Activated CD4-positive, alpha-beta T cell treated with anti-CD3 and anti-CD28 coated beads for 36 hours (primary cell): ENCODE measurements at regions of chr10 and their contacts with region 1.

Region 1: GRCh38 chr10:69179743-69180524 is at the start of gene SUPV3L1:
- DNase-seq: peak; percentile 91
- ATAC-seq: peak; percentile 89
- H3K4me3 Mint-ChIP-seq: peak within 1 kb of the TSS; percentile 90
- H3K27ac Mint-ChIP-seq: peak within 1 kb of the TSS; percentile 100
- H3K4me1 Mint-ChIP-seq: peaks cover 38% of the 10 kb centered on the region
- H3K27me3 Mint-ChIP-seq: no peaks in the 10 kb centered on the region
- total RNA-seq, gene SUPV3L1: 46.6 to 54.1 TPM

Region 2: GRCh38 chr10:68955832-68956532 is 224.0 kb before region 1 on chr10 and contains the start of gene DDX21:
- CTCF ChIA-PET with region 1: no interaction called
- POLR2A ChIA-PET with region 1: no interaction called
- intact Hi-C with region 1: loop called (anchors 1 to 2 kb)
- DNase-seq: peak; percentile 94
- ATAC-seq: peak; percentile 85
- H3K4me3 Mint-ChIP-seq: peak within 1 kb of the TSS; percentile 98
- H3K27ac Mint-ChIP-seq: peak within 1 kb of the TSS; percentile 100
- H3K4me1 Mint-ChIP-seq: peaks cover 35% of the 10 kb centered on the region
- H3K27me3 Mint-ChIP-seq: no peaks in the 10 kb centered on the region
- total RNA-seq, gene DDX21: 187 to 192 TPM

Region 3: DNA sequence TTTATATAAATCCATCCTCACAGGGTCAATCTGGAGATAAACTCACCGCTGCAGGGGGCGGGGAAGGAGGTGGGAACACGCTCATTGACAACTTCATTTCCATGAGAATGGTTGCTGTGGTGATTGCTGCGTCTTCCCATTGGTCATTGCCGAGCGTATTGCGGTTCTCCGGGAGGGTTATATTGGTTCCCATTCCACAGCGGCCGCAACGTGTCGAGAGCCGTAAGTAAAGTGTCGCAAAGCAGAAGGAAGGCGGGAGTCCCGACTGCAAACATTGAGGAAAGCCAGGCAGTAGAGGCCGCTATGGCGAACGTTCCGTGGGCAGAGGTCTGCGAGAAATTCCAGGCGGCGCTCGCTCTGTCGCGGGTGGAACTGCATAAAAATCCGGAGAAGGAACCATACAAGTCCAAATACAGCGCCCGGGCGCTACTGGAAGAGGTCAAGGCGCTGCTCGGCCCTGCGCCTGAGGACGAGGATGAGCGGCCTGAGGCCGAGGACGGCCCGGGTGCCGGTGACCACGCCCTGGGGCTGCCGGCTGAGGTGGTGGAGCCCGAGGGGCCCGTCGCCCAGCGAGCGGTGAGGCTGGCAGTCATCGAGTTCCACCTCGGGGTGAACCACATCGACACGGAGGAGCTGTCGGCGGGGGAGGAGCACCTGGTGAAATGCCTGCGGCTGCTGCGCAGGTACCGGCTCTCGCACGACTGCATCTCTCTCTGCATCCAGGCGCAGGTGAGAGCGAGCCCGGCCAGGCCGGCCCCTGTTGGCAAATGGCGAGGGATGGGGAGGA is 191.2 kb before region 1 on chr10 and contains the start of gene KIFBP:
- CTCF ChIA-PET with region 1: interaction called, 6 read pairs
- POLR2A ChIA-PET with region 1: no interaction called
- intact Hi-C with region 1: loop called in 1 of 2 experiments (anchors 1 kb)
- DNase-seq: peak; percentile 91
- ATAC-seq: peak; percentile 89
- H3K4me3 Mint-ChIP-seq: peak within 1 kb of the TSS; percentile 86
- H3K27ac Mint-ChIP-seq: peak within 1 kb of the TSS; percentile 86
- H3K4me1 Mint-ChIP-seq: peaks cover 51% of the 10 kb centered on the region
- H3K27me3 Mint-ChIP-seq: no peaks in the 10 kb centered on the region
- total RNA-seq, gene KIFBP: 12.9 to 15.6 TPM

Region 4: GRCh38 chr10:69087590-69088470 is 92.1 kb before region 1 on chr10 and contains the start of gene SRGN:
- CTCF ChIA-PET with region 1: no interaction called
- POLR2A ChIA-PET with region 1: interaction called, 3 read pairs
- intact Hi-C with region 1: loop called (anchors 1 kb)
- DNase-seq: peak; percentile 87
- ATAC-seq: peak; percentile 57
- H3K4me3 Mint-ChIP-seq: peak within 1 kb of the TSS; percentile 86
- H3K27ac Mint-ChIP-seq: peak within 1 kb of the TSS; percentile 99
- H3K4me1 Mint-ChIP-seq: peaks cover 55% of the 10 kb centered on the region
- H3K27me3 Mint-ChIP-seq: no peaks in the 10 kb centered on the region
- total RNA-seq, gene SRGN: 375 to 400 TPM

Region 5: GRCh38 chr10:69215405-69216176 is 35.7 kb after region 1 on chr10:
- CTCF ChIA-PET with region 1: interaction called, 3 read pairs
- POLR2A ChIA-PET with region 1: no interaction called
- intact Hi-C with region 1: loop called (anchors 1 to 2 kb)
- DNase-seq: peak; percentile 72
- ATAC-seq: peak; percentile 80
- H3K4me3 Mint-ChIP-seq: peak overlapping the region; percentile 15
- H3K27ac Mint-ChIP-seq: peak overlapping the region; percentile 81
- H3K4me1 Mint-ChIP-seq: peaks cover 36% of the 10 kb centered on the region
- H3K27me3 Mint-ChIP-seq: no peaks in the 10 kb centered on the region

Region 6: DNA sequence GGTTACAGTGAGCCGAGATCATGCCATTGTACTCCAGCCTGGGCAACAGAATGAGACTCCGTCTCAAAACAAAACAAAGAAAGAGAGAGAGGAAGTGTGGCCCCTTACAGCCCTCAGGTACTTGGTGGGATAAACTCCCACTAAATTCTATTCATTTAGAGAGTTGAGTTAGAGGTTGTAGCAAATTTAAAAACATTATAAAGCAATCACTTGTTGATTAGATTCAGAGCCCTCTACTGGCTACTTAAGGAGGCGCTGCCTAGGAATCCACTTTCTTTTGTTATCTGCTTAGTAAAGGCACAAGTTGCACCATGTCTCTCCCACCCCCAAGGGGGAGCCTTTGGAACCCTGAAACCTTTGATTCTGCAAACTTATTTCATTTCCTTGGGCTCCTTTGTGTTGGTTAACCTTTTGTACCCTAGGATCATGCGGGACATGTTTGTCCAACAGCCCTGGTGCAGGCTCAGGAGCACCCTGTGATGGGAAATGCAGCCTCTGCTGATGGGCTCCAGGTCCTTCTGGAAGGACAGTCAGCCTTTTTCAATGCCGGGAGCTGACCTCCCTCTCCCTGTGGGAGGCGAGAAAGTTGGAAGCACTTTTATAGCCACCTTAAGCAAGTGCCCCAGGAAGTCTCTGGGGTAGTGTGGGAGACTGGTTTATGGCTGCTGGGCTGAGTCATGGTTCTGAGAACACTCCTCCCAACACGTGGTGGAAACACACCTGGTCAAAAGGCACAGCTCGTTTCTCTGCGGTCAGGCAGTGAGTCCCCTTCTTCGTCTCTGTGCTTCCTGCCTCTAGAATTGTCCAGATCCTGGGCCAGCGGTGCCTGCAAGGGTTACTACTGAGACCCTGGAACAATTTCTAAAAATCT is 42.5 kb after region 1 on chr10:
- CTCF ChIA-PET with region 1: interaction called, 3 read pairs
- POLR2A ChIA-PET with region 1: no interaction called
- intact Hi-C with region 1: loop called (anchors 1 kb)
- DNase-seq: peak; percentile 90
- ATAC-seq: peak; percentile 92
- H3K4me3 Mint-ChIP-seq: peak overlapping the region; percentile 52
- H3K27ac Mint-ChIP-seq: peak overlapping the region; percentile 91
- H3K4me1 Mint-ChIP-seq: peaks cover 32% of the 10 kb centered on the region
- H3K27me3 Mint-ChIP-seq: no peaks in the 10 kb centered on the region

Region 7: DNA sequence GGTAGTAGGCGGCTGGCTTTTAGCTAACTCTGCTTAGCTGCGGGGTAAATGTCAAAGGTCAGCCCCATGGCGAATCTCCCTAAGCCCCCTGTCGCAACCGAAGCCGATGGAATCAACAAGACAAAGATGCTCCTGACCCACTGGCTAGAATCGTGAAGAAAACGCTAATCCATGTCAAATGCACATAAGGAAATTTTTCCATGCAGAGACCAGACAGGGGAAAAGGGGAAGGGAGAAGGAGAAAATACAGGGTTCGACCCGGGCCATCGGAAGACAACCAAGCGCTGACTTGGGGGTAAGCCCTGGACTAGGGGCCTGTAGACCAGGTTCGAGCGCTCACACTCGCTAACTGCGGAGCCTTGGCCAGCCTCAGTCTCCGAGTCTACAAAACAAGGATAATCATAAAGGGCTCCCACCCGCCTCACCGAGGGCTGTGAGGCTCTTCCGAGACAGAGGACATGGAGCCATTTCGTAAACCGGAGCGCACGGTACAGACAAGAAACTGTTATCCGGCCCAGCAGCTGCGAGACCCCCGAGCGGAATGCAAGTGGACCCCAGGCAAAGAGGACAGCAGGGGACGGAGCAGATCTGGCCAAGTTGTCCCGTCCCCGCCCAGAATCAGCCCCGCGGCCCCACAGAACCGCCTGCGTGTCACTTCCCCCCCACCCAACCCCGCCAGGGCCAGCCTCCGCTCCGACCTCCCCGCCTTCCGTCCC is 989.9 kb after region 1 on chr10:
- CTCF ChIA-PET with region 1: no interaction called
- POLR2A ChIA-PET with region 1: no interaction called
- intact Hi-C with region 1: loop called in 1 of 2 experiments (anchors 5 kb)
- DNase-seq: no peak
- ATAC-seq: peak; percentile 5
- H3K4me3 Mint-ChIP-seq: peak overlapping the region; percentile 94
- H3K27ac Mint-ChIP-seq: peak overlapping the region; percentile 84
- H3K4me1 Mint-ChIP-seq: peaks cover 64% of the 10 kb centered on the region
- H3K27me3 Mint-ChIP-seq: no peaks in the 10 kb centered on the region